Activated CD8-positive, alpha-beta T cell treated with anti-CD3 and anti-CD28 coated beads for 36 hours (primary cell): ENCODE measurements at regions of chrX and their contacts with region 1.

Region 1: GRCh38 chrX:71254092-71254941 is at the start of gene ZMYM3:
- DNase-seq: peak; percentile 86
- ATAC-seq: peak; percentile 88
- H3K4me3 Mint-ChIP-seq: peak within 1 kb of the TSS; percentile 89
- H3K27ac Mint-ChIP-seq: peak within 1 kb of the TSS; percentile 91
- H3K4me1 Mint-ChIP-seq: peaks cover 32% of the 10 kb centered on the region
- H3K27me3 Mint-ChIP-seq: no peaks in the 10 kb centered on the region
- CTCF ChIP-seq: no peak
- total RNA-seq, gene ZMYM3: 25.8 to 27.5 TPM

Region 2: GRCh38 chrX:71198066-71198465 is 56.3 kb before region 1 on chrX:
- CTCF ChIA-PET with region 1: interaction called, 8 read pairs
- POLR2A ChIA-PET with region 1: interaction called, 7 read pairs
- intact Hi-C with region 1: loop called (anchors 10 kb)
- DNase-seq: peak; percentile 24
- ATAC-seq: peak; percentile 26
- H3K4me3 Mint-ChIP-seq: peak overlapping the region; percentile 79
- H3K27ac Mint-ChIP-seq: peak overlapping the region; percentile 87
- H3K4me1 Mint-ChIP-seq: peaks cover 16% of the 10 kb centered on the region
- H3K27me3 Mint-ChIP-seq: no peaks in the 10 kb centered on the region
- CTCF ChIP-seq: no peak

Region 3: GRCh38 chrX:71227370-71228062 is 26.8 kb before region 1 on chrX:
- CTCF ChIA-PET with region 1: no interaction called
- POLR2A ChIA-PET with region 1: no interaction called
- intact Hi-C with region 1: no loop called
- DNase-seq: peak; percentile 21
- ATAC-seq: no peak
- H3K4me3 Mint-ChIP-seq: no peak overlapping the region
- H3K27ac Mint-ChIP-seq: no peak overlapping the region
- H3K4me1 Mint-ChIP-seq: no peaks in the 10 kb centered on the region
- H3K27me3 Mint-ChIP-seq: no peaks in the 10 kb centered on the region
- CTCF ChIP-seq: no peak

Region 4: DNA sequence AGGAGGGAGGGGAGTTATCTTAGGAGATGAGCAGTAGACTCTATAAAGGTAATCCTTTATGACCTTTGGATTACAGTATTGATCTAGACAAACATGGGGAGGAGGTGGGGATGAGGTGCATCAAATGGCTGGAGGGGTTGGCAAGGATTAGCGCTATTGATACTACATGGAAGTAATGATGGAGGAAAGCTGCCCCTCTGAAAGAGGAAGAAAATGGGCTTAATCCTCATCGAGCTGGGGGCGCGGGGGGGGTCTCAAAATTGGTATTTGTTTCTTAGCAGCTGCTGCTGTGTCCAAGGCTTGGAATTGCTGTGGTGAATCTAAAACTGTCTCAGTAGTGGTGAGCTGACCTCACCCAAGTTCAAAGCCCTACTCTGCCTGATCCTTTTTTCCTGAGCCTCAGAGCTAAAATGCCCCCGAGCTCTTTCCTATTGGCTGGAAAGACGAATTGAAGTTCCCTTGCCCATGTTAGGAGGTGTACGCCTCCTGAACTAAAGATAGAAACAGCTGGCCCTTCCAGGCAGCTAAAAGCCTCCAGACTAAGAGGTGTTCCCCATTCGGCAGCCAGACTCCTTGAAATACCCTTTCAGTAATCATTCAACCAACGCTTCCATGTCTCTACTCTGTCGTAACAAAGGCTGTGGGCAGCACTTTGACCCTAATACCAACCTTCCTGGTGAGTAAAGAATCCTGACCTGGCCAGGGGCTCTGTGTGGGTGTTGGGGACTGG is 47.0 kb after region 1 on chrX and contains the start of gene ITGB1BP2:
- CTCF ChIA-PET with region 1: no interaction called
- POLR2A ChIA-PET with region 1: no interaction called
- intact Hi-C with region 1: no loop called
- DNase-seq: no peak
- ATAC-seq: no peak
- H3K4me3 Mint-ChIP-seq: no peak within 1 kb of the TSS
- H3K27ac Mint-ChIP-seq: peak within 1 kb of the TSS; percentile 75
- H3K4me1 Mint-ChIP-seq: peaks cover 23% of the 10 kb centered on the region
- H3K27me3 Mint-ChIP-seq: no peaks in the 10 kb centered on the region
- CTCF ChIP-seq: no peak
- total RNA-seq, gene ITGB1BP2: 5.3 to 6.7 TPM

Region 5: DNA sequence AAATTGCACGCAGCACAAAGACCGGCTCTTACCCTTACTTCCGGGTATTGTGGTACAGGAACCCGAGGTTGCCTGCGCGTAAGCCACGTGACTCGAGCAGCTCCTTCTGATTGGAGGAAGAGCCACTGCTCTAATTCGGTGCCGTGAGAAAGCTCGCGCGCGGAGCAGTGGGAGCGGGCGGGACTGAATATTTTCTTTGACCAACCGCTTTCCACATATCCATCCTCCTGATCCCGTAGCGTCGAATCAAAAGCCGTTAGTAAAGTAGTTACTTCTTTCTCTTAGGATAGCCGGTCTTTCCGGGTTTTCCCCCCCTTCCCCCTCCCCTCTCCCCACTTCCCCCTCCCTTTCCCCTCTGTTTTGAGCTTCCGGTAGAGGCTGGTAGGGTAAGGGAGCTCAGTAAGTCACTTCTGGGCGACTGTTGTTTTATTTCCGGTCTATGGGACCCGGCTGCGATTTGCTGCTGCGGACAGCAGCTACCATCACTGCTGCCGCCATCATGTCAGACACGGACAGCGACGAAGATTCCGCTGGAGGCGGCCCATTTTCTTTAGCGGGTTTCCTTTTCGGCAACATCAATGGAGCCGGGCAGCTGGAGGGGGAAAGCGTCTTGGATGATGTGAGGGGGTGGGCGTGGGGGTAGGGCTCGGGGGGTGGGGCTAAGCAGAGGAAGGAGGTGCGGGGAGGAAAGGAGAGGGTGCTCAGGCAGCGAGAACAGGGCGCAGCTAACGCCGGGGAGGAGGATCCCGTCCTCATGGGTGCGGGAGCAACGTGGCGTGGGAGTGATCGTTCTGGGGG is 111.8 kb after region 1 on chrX and contains the start of gene TAF1:
- CTCF ChIA-PET with region 1: no interaction called
- POLR2A ChIA-PET with region 1: interaction called, 11 read pairs
- intact Hi-C with region 1: no loop called
- DNase-seq: peak; percentile 96
- ATAC-seq: peak; percentile 90
- H3K4me3 Mint-ChIP-seq: peak within 1 kb of the TSS; percentile 94
- H3K27ac Mint-ChIP-seq: peak within 1 kb of the TSS; percentile 98
- H3K4me1 Mint-ChIP-seq: peaks cover 18% of the 10 kb centered on the region
- H3K27me3 Mint-ChIP-seq: no peaks in the 10 kb centered on the region
- CTCF ChIP-seq: no peak
- total RNA-seq, gene TAF1: 26.8 to 30.9 TPM